ENCODE measurements at regions of chr1 and their contacts with region 1.

Region 1: GRCh38 chr1:200409761-200410565 is at the start of gene ZNF281:
- DNase-seq: peak; percentile 97
- ATAC-seq: peak; percentile 99
- H3K4me3 Mint-ChIP-seq: peak within 1 kb of the TSS; percentile 80
- H3K27ac Mint-ChIP-seq: peak within 1 kb of the TSS; percentile 93
- H3K4me1 Mint-ChIP-seq: peaks cover 49% of the 10 kb centered on the region
- H3K27me3 Mint-ChIP-seq: no peaks in the 10 kb centered on the region
- total RNA-seq, gene ZNF281: 10.8 to 13.5 TPM

Region 2: DNA sequence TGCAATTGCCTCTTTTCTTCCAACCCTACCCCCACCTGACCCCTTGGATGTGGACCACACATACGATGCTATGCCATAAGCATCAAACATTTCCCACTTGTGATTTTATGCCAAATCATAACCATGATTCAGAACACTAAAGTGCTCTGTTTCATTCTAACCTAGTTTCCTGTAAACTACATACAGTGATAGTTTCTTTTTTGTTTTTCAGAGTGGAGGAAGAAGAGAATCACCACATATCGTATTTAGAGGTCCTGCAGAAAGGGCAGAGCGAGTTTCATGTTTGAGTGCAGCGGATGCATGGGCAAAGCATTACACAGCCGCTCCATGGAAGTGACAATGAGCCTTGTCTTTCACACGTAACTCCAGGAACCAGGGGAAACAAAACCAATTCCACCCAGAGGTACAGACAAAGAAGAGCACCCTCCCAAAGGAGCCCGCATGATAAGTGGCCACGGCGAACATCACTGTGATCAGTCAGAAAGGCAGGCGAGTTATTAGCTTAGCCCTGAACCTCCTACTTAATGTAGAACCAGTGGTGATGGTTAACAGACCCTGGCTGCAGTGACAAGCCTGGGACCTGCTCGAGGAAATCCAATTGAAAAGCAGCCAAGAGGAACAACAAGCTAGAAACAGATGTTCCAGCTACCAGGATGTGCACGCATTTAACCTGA is 63.9 kb after region 1 on chr1:
- CTCF ChIA-PET with region 1: interaction called, 3 read pairs
- POLR2A ChIA-PET with region 1: no interaction called
- intact Hi-C with region 1: loop called in 1 of 2 experiments (anchors 5 kb)
- DNase-seq: peak; percentile 55
- ATAC-seq: peak; percentile 80
- H3K4me3 Mint-ChIP-seq: peak overlapping the region; percentile 32
- H3K27ac Mint-ChIP-seq: peak overlapping the region; percentile 48
- H3K4me1 Mint-ChIP-seq: peaks cover 47% of the 10 kb centered on the region
- H3K27me3 Mint-ChIP-seq: peaks cover 8% of the 10 kb centered on the region

Region 3: GRCh38 chr1:200526709-200527612 is 117.0 kb after region 1 on chr1:
- CTCF ChIA-PET with region 1: no interaction called
- POLR2A ChIA-PET with region 1: no interaction called
- intact Hi-C with region 1: no loop called
- DNase-seq: no peak
- ATAC-seq: no peak
- H3K4me3 Mint-ChIP-seq: no peak overlapping the region
- H3K27ac Mint-ChIP-seq: no peak overlapping the region
- H3K4me1 Mint-ChIP-seq: peaks cover 26% of the 10 kb centered on the region
- H3K27me3 Mint-ChIP-seq: no peaks in the 10 kb centered on the region

Region 4: GRCh38 chr1:200979574-200980451 is 569.9 kb after region 1 on chr1:
- CTCF ChIA-PET with region 1: no interaction called
- POLR2A ChIA-PET with region 1: no interaction called
- intact Hi-C with region 1: no loop called
- DNase-seq: peak; percentile 86
- ATAC-seq: peak; percentile 69
- H3K4me3 Mint-ChIP-seq: no peak overlapping the region
- H3K27ac Mint-ChIP-seq: no peak overlapping the region
- H3K4me1 Mint-ChIP-seq: no peaks in the 10 kb centered on the region
- H3K27me3 Mint-ChIP-seq: no peaks in the 10 kb centered on the region

Measured in activated CD4-positive, alpha-beta T cell treated with anti-CD3 and anti-CD28 coated beads for 36 hours (primary cell).